ENCODE measurements at regions of chrX and their contacts with region 1.

Region 1: DNA sequence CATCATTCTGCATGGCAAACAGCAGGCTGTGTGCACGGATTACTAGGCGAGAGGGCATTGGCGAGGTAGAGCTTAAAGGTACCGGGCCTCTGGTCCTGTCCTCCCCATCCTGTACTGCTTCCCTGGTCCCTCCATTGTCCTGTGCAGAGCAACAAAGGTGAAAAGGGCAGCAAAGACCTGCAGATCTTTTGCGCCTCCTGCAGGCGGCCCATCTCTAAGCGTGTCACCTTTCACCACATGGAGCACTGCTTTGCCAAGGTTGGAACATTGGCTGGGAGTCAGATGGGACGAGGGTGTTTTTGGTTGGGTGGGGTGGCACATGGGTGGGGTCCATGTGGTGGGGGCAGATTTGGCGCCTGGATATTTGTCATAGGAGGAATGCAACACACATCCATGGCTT is 64.7 kb upstream of the UXT start:
- DNase-seq: peak; percentile 56
- ATAC-seq: peak; percentile 51
- H3K4me3 Mint-ChIP-seq: no peak overlapping the region
- H3K27ac Mint-ChIP-seq: no peak overlapping the region
- H3K4me1 Mint-ChIP-seq: no peaks in the 10 kb centered on the region
- H3K27me3 Mint-ChIP-seq: peaks cover 4% of the 10 kb centered on the region

Region 2: DNA sequence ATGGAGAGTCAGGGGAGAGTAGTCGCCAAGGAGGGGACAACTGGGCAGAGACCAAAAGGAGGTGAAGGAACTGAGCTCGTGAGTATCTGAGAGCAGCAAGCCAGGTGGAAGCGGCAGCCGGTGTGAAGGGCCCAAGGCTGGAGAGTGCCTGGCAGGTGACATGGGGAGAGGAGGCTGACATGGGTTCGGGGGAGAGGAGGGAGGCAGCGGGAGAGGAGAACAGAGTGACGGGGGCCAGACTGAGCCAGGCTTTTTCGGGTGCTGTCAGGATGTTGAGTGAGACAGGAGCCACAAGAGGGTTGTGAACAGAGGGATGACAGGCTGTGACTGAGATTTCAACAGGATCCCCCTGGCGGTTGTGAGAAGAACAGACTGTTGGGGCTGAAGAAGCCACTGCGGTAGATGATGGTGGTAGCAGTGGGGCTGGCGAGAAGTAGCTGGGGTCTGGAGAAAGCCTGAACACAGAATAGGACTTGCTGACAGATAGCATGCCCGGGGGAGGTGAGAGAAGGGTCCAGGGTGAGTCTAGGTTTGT is 79.1 kb before region 1 on chrX:
- CTCF ChIA-PET with region 1: no interaction called
- POLR2A ChIA-PET with region 1: no interaction called
- intact Hi-C with region 1: loop called in 1 of 2 experiments (anchors 5 kb)
- DNase-seq: no peak
- ATAC-seq: peak; percentile 15
- H3K4me3 Mint-ChIP-seq: no peak overlapping the region
- H3K27ac Mint-ChIP-seq: peak overlapping the region; percentile 67
- H3K4me1 Mint-ChIP-seq: peaks cover 41% of the 10 kb centered on the region
- H3K27me3 Mint-ChIP-seq: no peaks in the 10 kb centered on the region

Region 3: GRCh38 chrX:47664737-47665136 is 59.0 kb before region 1 on chrX:
- CTCF ChIA-PET with region 1: no interaction called
- POLR2A ChIA-PET with region 1: no interaction called
- intact Hi-C with region 1: loop called in 1 of 2 experiments (anchors 2 kb)
- DNase-seq: no peak
- ATAC-seq: no peak
- H3K4me3 Mint-ChIP-seq: no peak overlapping the region
- H3K27ac Mint-ChIP-seq: peak overlapping the region; percentile 69
- H3K4me1 Mint-ChIP-seq: peaks cover 28% of the 10 kb centered on the region
- H3K27me3 Mint-ChIP-seq: no peaks in the 10 kb centered on the region

Region 4: DNA sequence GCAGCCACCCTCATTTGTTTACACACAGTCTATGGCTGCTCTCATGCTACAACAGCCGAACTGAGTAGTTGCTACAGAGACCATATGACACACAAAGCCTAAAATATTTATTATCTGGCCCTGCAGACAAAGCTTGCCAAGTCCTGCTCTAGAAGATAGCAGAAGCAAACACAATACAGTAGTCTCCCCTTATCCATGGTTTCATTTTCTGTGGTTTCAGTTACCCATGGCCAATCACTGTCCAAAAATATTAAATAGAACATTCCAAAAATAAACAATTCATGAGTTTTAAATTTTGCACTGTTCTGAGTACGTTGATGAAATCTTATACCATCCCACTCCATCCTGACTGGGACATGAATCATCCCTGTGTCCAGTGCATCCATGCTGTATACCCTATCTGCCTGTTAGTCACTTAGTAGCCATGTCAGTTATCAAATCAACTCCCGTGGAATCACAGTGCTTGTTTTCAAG is 72.8 kb after region 1 on chrX:
- CTCF ChIA-PET with region 1: no interaction called
- POLR2A ChIA-PET with region 1: no interaction called
- intact Hi-C with region 1: no loop called
- DNase-seq: no peak
- ATAC-seq: no peak
- H3K4me3 Mint-ChIP-seq: no peak overlapping the region
- H3K27ac Mint-ChIP-seq: no peak overlapping the region
- H3K4me1 Mint-ChIP-seq: no peaks in the 10 kb centered on the region
- H3K27me3 Mint-ChIP-seq: no peaks in the 10 kb centered on the region

Region 5: GRCh38 chrX:47936224-47936939 is 212.7 kb after region 1 on chrX:
- CTCF ChIA-PET with region 1: no interaction called
- POLR2A ChIA-PET with region 1: no interaction called
- intact Hi-C with region 1: no loop called
- DNase-seq: peak; percentile 44
- ATAC-seq: peak; percentile 80
- H3K4me3 Mint-ChIP-seq: peak overlapping the region; percentile 51
- H3K27ac Mint-ChIP-seq: peak overlapping the region; percentile 18
- H3K4me1 Mint-ChIP-seq: peaks cover 8% of the 10 kb centered on the region
- H3K27me3 Mint-ChIP-seq: no peaks in the 10 kb centered on the region